Aorta (tissue), 5 donors: ENCODE measurements at regions of chr11 and their contacts with region 1.

Region 1: DNA sequence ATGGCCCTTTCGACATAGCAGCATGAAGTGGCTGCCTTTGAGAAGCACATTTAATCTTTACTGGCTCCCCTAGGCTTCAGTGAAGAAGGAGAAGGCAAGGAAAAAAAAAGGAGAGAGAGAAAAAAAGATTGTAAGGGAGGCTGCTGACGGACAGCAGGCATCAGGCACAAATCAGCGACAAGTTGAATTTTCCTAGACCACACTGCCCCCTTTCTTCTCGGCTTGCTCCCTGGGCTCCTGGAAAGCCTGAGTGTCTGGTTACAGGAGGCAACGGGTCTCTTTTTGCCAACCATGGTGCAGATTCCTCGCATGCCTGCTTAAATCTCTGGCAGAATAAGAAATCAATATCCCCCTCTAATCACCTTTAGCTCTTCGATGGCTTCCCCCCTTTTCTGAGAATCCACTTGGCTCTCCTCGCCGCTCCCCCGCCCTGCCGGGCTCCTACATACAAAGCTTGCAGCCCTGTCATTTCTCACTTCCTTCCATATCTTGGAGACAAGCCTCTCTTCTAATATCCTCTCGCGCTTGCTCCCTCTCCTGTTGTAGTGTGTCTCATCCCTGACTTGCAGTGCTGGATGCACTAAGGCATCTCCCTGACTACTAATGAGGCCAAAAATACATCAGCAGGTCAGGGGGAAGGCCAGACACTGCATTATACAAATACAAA is 14.3 kb downstream of the BLID start:
- DNase-seq: peak; percentile 75 to 76
- ATAC-seq: peak; percentile 91
- H3K4me3 ChIP-seq: peak overlapping the region; percentile 93 to 99
- H3K27ac ChIP-seq: peak overlapping the region; percentile 85 to 92
- H3K4me1 ChIP-seq: peaks cover 4 to 7% of the 10 kb centered on the region in 2 donors
- H3K27me3 ChIP-seq: no peaks in the 10 kb centered on the region

Region 2: GRCh38 chr11:121655537-121656327 is 446.0 kb before region 1 on chr11:
- intact Hi-C with region 1: loop called (anchors 2 kb)
- DNase-seq: peak; percentile 93 to 96
- ATAC-seq: peak; percentile 98
- H3K4me3 ChIP-seq: peak overlapping the region; percentile 19 to 57
- H3K27ac ChIP-seq: peak overlapping the region; percentile 74 to 99
- H3K4me1 ChIP-seq: no peaks in the 10 kb centered on the region
- H3K27me3 ChIP-seq: no peaks in the 10 kb centered on the region

Region 3: GRCh38 chr11:122020902-122021301 is 80.9 kb before region 1 on chr11:
- intact Hi-C with region 1: loop called (anchors 5 kb)
- DNase-seq: no peak
- ATAC-seq: no peak
- H3K4me3 ChIP-seq: no peak overlapping the region
- H3K27ac ChIP-seq: no peak overlapping the region
- H3K4me1 ChIP-seq: no peaks in the 10 kb centered on the region
- H3K27me3 ChIP-seq: no peaks in the 10 kb centered on the region

Region 4: GRCh38 chr11:122085264-122085663 is 16.5 kb before region 1 on chr11:
- intact Hi-C with region 1: no loop called
- DNase-seq: no peak
- ATAC-seq: peak; percentile 73
- H3K4me3 ChIP-seq: no peak overlapping the region
- H3K27ac ChIP-seq: no peak overlapping the region
- H3K4me1 ChIP-seq: peaks cover 0 to 9% of the 10 kb centered on the region in 2 donors
- H3K27me3 ChIP-seq: no peaks in the 10 kb centered on the region

Region 5: GRCh38 chr11:122159173-122159721 is 57.5 kb after region 1 on chr11:
- intact Hi-C with region 1: loop called in 1 of 2 experiments (anchors 5 kb)
- DNase-seq: no peak
- ATAC-seq: peak; percentile 52
- H3K4me3 ChIP-seq: peak overlapping the region; percentile 9 to 63
- H3K27ac ChIP-seq: peak overlapping the region; percentile 61 to 84
- H3K4me1 ChIP-seq: peaks cover 1 to 16% of the 10 kb centered on the region in 2 donors
- H3K27me3 ChIP-seq: no peaks in the 10 kb centered on the region

Region 6: DNA sequence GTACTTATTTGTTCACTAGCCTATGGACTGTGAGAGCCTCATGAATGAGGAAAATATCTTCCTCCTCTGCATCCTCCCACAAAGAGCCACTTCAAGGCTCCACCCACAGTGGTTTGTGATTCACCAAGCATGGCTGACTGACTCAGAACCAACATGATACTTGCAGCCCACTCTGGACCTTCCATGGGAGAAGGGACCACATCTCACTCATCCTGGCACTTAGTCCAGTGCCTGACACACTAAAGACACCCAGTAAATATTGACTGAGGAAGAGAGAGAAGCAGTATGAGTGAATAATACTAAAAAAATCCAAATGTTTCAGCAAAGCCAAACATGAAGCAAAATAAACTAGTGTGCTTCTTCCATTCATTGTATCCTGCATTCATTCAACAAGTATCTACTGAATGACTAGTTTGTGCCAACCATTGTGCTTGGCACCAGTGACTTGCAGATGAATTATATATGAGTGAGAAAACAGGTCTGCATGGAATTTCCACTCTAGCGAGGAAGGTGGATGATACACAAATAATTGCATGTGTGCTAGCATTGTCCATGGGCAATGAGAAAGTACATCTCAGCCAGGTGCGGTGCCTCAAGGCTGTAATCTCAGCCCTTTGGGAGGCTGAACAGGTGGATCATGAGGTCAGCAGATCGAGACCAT is 69.2 kb after region 1 on chr11:
- intact Hi-C with region 1: no loop called
- DNase-seq: no peak
- ATAC-seq: no peak
- H3K4me3 ChIP-seq: no peak overlapping the region
- H3K27ac ChIP-seq: peak overlapping the region in 1 of 2 donors; percentile 66
- H3K4me1 ChIP-seq: peaks cover 0 to 13% of the 10 kb centered on the region in 2 donors
- H3K27me3 ChIP-seq: no peaks in the 10 kb centered on the region

Region 7: GRCh38 chr11:122202951-122203456 is 101.2 kb after region 1 on chr11:
- intact Hi-C with region 1: loop called (anchors 2 kb)
- DNase-seq: peak; percentile 80 to 91
- ATAC-seq: peak; percentile 91
- H3K4me3 ChIP-seq: peak overlapping the region; percentile 38 to 73
- H3K27ac ChIP-seq: peak overlapping the region in 1 of 2 donors; percentile 22
- H3K4me1 ChIP-seq: peaks cover 3 to 8% of the 10 kb centered on the region in 2 donors
- H3K27me3 ChIP-seq: no peaks in the 10 kb centered on the region